ENCODE measurements at regions of chr12 and their contacts with region 1.

Region 1: GRCh38 chr12:53727310-53728041 is at the start of gene CALCOCO1:
- DNase-seq: peak; percentile 99
- H3K4me3 Mint-ChIP-seq: peak within 1 kb of the TSS; percentile 95
- H3K27ac Mint-ChIP-seq: peak within 1 kb of the TSS; percentile 90
- H3K4me1 Mint-ChIP-seq: peaks cover 26% of the 10 kb centered on the region
- H3K27me3 Mint-ChIP-seq: peaks cover 2% of the 10 kb centered on the region
- total RNA-seq, gene CALCOCO1: 14.5 and 15.2 TPM in 2 replicates

Region 2: DNA sequence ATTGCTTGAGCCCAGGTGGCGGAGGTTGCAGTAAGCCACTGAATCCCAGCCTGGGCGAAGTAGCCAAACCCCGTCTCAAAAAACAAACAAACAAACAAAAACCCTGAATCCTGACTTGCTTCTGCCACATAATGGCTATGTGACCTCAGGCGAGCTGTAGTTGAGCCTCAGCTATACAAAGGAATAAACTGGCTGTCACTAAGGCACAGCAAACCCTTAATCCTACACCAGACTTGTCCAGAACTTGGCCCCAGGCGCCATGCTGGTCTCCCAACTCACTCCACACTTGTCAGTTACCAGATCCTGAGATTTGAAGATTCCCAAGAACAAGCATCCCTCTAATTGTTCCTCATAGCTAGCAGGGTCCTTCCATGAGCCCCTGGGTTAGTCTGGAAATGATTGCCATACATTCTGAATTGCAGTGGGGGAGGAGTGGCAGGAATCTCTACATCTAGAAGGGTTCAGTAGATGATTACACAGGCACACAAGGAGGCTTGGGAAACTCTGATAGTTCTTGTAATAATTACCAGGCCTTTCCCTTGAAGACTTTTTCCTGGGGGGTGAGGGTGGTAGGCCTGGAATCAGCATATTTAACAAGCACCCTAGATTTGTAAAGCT is 238.1 kb before region 1 on chr12:
- intact Hi-C with region 1: no loop called
- DNase-seq: no peak
- H3K4me3 Mint-ChIP-seq: no peak overlapping the region
- H3K27ac Mint-ChIP-seq: peak overlapping the region; percentile 11
- H3K4me1 Mint-ChIP-seq: peaks cover 21% of the 10 kb centered on the region
- H3K27me3 Mint-ChIP-seq: no peaks in the 10 kb centered on the region

Region 3: GRCh38 chr12:53500776-53501614 is 226.5 kb before region 1 on chr12 and contains the start of gene TARBP2:
- intact Hi-C with region 1: loop called (anchors 2 kb)
- DNase-seq: peak; percentile 98
- H3K4me3 Mint-ChIP-seq: peak within 1 kb of the TSS; percentile 93
- H3K27ac Mint-ChIP-seq: peak within 1 kb of the TSS; percentile 97
- H3K4me1 Mint-ChIP-seq: peaks cover 35% of the 10 kb centered on the region
- H3K27me3 Mint-ChIP-seq: no peaks in the 10 kb centered on the region
- total RNA-seq, gene TARBP2: 49.7 and 52.2 TPM in 2 replicates

Region 4: GRCh38 chr12:53738406-53739213 is 11.1 kb after region 1 on chr12:
- intact Hi-C with region 1: loop called (anchors 1 kb)
- DNase-seq: peak; percentile 78
- H3K4me3 Mint-ChIP-seq: peak overlapping the region; percentile 51
- H3K27ac Mint-ChIP-seq: no peak overlapping the region
- H3K4me1 Mint-ChIP-seq: peaks cover 19% of the 10 kb centered on the region
- H3K27me3 Mint-ChIP-seq: peaks cover 65% of the 10 kb centered on the region